OCI-LY7 (cell line): ENCODE measurements at regions of chr17 and their contacts with region 1.

Region 1: GRCh38 chr17:82418001-82418986 is at the starts of genes HEXD and OGFOD3:
- DNase-seq: peak; percentile 96
- H3K4me3 ChIP-seq: peak within 1 kb of the TSS; percentile 84
- H3K27ac ChIP-seq: peak within 1 kb of the TSS; percentile 66
- H3K4me1 ChIP-seq: peaks cover 20% of the 10 kb centered on the region
- CTCF ChIP-seq: no peak
- total RNA-seq, gene HEXD: 88.8 and 93.2 TPM in 2 replicates
- total RNA-seq, gene OGFOD3: 46.9 and 55.6 TPM in 2 replicates

Region 2: DNA sequence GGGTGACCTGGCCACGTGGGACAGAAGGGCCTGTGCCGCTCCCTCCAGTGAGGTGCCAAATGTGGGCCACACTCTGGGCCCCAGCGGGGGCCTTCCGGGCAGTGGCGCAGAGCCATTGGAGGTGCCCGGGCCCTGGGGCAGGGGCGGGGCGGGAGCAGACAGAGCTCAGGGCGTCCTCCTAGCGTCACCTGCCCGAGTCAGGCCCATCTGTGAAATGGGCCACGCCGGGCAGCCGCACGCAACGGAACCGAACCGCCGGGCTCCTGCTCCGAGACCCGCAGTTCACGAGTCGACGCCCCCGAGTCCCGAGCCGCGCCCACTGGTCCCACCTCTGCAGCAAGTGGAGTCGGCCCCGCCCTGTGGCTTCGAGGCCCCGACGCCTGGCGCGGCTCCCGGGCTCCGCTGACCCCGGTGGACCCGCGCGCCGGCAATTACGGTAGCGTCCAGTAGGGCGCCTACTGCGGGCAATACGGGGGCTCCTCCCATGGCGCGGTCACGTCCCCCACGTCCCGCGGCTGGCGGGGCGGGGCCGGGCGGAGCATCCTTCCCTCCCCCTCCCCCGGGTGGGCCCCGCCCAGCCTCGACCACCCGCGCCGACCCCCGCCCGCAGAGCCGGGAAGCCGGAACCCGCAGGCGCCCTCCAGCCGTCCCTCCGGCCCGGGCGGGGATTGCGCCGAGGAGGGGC is 187.5 kb before region 1 on chr17:
- CTCF ChIA-PET with region 1: no interaction called
- POLR2A ChIA-PET with region 1: no interaction called
- intact Hi-C with region 1: loop called (anchors 5 kb)
- DNase-seq: no peak
- H3K4me3 ChIP-seq: peak overlapping the region; percentile 10
- H3K27ac ChIP-seq: no peak overlapping the region
- H3K4me1 ChIP-seq: peaks cover 43% of the 10 kb centered on the region
- CTCF ChIP-seq: peak; percentile 37; the same call in 1 of the 2 replicates

Region 3: DNA sequence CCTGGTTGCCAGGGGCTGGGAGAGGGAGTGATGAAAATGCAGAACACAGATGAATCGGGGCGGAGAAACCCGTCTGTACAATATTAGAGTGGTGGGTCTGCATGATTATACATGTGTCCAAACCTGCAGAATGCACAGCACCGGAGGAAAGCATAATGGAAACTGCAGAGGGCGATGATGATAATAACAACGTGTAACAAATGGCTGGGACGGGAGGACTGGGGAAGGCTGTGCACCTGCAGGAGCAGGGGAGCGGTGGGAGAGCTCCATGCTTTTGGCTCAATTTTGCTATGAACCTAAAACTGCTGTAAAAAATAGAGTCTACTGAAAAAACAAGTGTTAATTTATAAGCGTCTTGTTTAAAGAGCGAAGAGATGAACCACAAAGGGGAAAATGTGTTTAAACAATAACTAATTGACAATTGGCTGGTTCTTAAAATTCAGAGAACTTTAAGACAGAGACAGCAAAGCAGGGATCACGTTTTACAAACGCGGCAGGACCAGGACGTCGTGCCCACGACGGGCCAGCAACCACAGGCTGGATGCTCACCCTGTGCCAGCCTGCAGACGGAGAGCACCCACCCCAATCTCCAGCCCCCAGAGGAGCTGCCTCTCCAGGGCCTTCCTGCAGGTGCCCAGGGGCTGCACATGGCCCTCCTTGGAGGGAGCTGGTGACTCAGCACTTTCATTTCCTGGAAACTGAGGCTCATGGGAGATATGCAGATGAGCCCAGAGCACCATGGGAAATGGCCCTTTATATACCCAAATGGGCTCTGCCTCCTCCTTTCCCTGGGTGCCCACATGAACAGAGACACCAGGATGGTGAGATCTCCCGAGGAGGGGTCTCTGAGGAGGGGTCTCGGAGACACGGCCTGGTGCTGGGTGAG is 59.6 kb before region 1 on chr17 and contains the start of gene TEX19:
- CTCF ChIA-PET with region 1: interaction called, 4 read pairs
- POLR2A ChIA-PET with region 1: interaction called, 6 read pairs
- intact Hi-C with region 1: loop called (anchors 1 kb)
- DNase-seq: peak; percentile 82
- H3K4me3 ChIP-seq: peak within 1 kb of the TSS; percentile 13
- H3K27ac ChIP-seq: peak within 1 kb of the TSS; percentile 59
- H3K4me1 ChIP-seq: peaks cover 54% of the 10 kb centered on the region
- CTCF ChIP-seq: peak; percentile 69
- total RNA-seq, gene TEX19: 2.6 and 3.4 TPM in 2 replicates

Region 4: DNA sequence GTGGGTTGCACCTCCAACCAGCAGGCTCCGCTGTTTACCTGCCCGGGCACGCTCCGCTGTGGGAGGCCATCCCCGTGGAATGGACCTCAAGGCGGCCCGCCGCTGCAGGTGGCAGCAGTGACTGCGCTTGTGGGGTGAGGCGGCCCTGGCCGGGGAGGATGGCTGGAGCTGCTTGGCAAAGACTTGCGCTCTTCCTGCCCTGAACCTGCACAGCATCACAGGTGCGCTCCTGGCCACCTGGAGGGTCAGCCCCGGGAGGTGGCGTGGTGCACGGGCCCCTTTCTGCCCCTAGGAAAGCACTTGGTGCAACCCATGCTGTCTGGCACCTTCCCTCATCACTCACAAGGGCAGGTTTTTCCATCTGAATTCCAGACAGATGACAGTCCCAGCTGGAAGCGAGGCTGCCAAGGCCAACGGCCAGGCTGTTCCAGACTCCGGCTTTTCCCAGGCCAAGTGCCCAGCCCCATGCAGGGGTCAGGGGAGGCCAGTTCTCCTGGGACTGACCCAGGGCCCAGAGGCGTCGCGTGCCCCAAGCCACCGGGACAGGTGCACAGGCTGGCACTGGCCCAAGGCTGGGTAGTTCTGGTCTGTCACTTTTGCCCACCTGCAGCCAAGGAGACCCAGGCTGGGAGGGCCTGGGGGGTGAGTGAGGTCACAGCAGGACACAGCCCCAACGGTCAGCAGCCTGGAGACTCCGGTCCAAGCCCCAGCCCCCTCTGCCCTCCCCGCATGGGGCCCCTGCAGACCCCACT is 33.4 kb before region 1 on chr17:
- CTCF ChIA-PET with region 1: no interaction called
- POLR2A ChIA-PET with region 1: no interaction called
- intact Hi-C with region 1: no loop called
- DNase-seq: peak; percentile 31
- H3K4me3 ChIP-seq: no peak overlapping the region
- H3K27ac ChIP-seq: no peak overlapping the region
- H3K4me1 ChIP-seq: peaks cover 1% of the 10 kb centered on the region
- CTCF ChIP-seq: peak; percentile 41; the same call in 1 of the 2 replicates

Region 5: DNA sequence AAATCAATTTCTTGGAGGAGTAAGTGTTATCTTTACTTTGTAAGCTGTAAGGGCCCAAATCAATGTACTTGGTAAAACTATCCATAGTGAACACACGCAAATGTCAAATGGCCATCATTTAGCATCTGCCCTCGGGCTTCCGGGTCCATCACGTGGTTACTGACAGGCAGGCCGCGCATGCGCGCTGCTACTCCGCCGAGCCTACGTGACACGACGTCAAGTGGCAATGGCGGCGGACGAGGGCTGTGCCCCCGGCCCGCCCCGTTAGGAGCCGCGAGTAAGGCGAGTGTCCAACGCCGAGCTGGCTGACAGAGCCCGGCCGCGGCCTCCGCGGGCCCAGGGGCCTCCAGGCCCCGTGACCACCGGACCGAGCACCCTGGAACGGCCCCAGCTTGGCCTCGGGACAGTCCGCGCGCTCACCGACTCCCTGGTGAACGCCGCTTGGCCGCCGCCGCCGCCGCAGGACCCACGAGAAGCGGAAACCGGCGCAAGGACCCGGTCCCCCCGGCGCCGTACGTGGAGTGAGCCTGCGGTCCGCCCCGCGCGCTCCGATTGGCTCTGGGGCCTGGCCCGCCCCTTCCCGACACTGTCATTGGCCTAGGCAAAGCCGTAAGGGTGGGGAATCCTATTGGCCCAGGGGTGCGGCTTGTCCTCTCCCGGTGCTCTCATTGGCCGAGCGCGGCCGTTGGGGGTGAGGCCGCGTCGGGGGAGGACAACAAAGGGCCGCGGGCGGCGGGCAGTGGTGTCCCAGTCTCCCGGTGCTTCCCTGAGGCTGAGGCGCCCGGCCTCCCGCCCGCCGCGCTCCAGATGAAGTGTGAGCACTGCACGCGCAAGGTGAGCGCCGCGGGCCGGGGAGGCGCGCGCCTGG is 39.9 kb after region 1 on chr17 and contains the start of gene NARF:
- CTCF ChIA-PET with region 1: no interaction called
- POLR2A ChIA-PET with region 1: interaction called, 5 read pairs
- intact Hi-C with region 1: loop called (anchors 5 kb)
- DNase-seq: peak; percentile 100
- H3K4me3 ChIP-seq: peak within 1 kb of the TSS; percentile 75
- H3K27ac ChIP-seq: peak within 1 kb of the TSS; percentile 89
- H3K4me1 ChIP-seq: peaks cover 18% of the 10 kb centered on the region
- CTCF ChIP-seq: no peak
- total RNA-seq, gene NARF: 75.0 and 82.5 TPM in 2 replicates